ENCODE measurements at regions of chr3 and their contacts with region 1.

Region 1: GRCh38 chr3:150183678-150184425 is 213.2 kb upstream of the PFN2 start:
- DNase-seq: peak; percentile 83
- ATAC-seq: peak; percentile 97
- H3K4me3 ChIP-seq: peak overlapping the region; percentile 32
- H3K27ac ChIP-seq: peak overlapping the region; percentile 36; the same call in 1 of the 2 replicates
- H3K4me1 ChIP-seq: peaks cover 2% of the 10 kb centered on the region; the same call in 1 of the 2 replicates
- H3K27me3 ChIP-seq: no peaks in the 10 kb centered on the region
- CTCF ChIP-seq: peak; percentile 80
- POLR2A ChIP-seq: no peak
- RAD21 ChIP-seq: peak; percentile 91

Region 2: GRCh38 chr3:150064971-150065370 is 118.9 kb before region 1 on chr3:
- CTCF ChIA-PET with region 1: no interaction called
- POLR2A ChIA-PET with region 1: no interaction called
- dilution Hi-C with region 1: no loop called
- in situ Hi-C with region 1: no loop called
- intact Hi-C with region 1: no loop called
- DNase-seq: peak; percentile 52
- ATAC-seq: no peak
- H3K4me3 ChIP-seq: no peak overlapping the region
- H3K27ac ChIP-seq: no peak overlapping the region
- H3K4me1 ChIP-seq: peaks cover 10% of the 10 kb centered on the region
- H3K27me3 ChIP-seq: peaks cover 2% of the 10 kb centered on the region; the same call in 1 of the 2 replicates
- CTCF ChIP-seq: no peak
- POLR2A ChIP-seq: no peak
- RAD21 ChIP-seq: no peak

Region 3: DNA sequence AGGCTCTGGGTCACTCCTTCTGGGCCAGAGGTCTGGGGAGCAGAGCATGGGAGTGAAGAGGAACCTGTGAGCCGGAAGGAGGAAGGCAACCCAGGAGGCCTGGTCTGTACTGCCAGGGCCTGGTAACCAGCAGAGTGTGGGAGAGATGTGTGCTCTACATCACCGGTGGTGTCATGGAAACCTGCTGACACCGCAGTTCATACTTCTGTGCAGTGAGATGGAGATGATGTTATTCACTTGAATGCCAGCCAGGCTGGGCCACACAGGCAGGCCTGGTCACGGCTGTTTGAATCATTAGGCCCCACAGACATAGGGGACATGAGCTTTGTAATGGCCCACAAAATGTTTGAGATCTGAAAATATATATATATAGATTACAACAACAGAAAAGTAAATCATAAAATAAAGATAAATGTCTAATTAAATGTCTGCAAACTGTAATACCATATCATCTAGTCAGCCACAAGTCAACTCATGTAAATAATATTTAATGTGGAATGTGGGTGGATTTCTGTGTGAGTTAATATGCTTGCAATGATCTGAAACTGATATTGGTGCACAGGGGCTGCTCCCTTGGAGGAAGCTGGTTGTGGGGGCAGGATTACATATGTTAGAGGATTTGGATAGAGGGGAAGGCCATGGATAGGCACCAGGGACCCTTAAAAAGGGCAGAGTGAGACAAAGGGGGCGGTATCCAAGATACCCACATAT is 104.7 kb before region 1 on chr3:
- CTCF ChIA-PET with region 1: no interaction called
- POLR2A ChIA-PET with region 1: no interaction called
- dilution Hi-C with region 1: no loop called
- in situ Hi-C with region 1: no loop called
- intact Hi-C with region 1: loop called (anchors 5 kb)
- DNase-seq: peak; percentile 95
- ATAC-seq: peak; percentile 79
- H3K4me3 ChIP-seq: no peak overlapping the region
- H3K27ac ChIP-seq: peak overlapping the region; percentile 49
- H3K4me1 ChIP-seq: peaks cover 21% of the 10 kb centered on the region
- H3K27me3 ChIP-seq: no peaks in the 10 kb centered on the region
- CTCF ChIP-seq: no peak
- POLR2A ChIP-seq: no peak
- RAD21 ChIP-seq: no peak; the same call in 1 of the 2 replicates

Region 4: DNA sequence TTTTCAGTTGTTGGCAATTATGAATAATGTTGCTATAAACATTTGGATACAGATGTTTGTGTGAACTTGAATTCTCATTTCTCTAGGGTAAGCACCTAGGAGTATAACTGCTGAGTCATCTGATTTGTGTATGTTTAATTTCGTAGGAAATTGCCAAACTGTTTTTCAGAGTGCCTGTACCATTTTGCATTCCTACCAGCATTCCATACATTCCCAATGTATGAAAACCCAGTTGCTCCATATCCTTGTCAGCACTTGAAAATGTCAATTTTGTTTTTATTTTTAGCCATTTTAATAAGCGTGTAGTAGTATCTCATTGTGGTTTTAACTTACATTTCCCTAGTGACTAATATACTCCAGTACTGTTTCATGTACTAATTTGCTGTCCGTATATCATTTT is 125.7 kb after region 1 on chr3:
- CTCF ChIA-PET with region 1: no interaction called
- POLR2A ChIA-PET with region 1: no interaction called
- dilution Hi-C with region 1: no loop called
- in situ Hi-C with region 1: no loop called
- intact Hi-C with region 1: no loop called
- DNase-seq: peak; percentile 84
- ATAC-seq: peak; percentile 65
- H3K4me3 ChIP-seq: no peak overlapping the region
- H3K27ac ChIP-seq: no peak overlapping the region
- H3K4me1 ChIP-seq: peaks cover 9% of the 10 kb centered on the region
- H3K27me3 ChIP-seq: no peaks in the 10 kb centered on the region
- CTCF ChIP-seq: no peak
- POLR2A ChIP-seq: no peak
- RAD21 ChIP-seq: no peak